HCT116 (cell line): ENCODE measurements at regions of chr6 and their contacts with region 1.

Region 1: DNA sequence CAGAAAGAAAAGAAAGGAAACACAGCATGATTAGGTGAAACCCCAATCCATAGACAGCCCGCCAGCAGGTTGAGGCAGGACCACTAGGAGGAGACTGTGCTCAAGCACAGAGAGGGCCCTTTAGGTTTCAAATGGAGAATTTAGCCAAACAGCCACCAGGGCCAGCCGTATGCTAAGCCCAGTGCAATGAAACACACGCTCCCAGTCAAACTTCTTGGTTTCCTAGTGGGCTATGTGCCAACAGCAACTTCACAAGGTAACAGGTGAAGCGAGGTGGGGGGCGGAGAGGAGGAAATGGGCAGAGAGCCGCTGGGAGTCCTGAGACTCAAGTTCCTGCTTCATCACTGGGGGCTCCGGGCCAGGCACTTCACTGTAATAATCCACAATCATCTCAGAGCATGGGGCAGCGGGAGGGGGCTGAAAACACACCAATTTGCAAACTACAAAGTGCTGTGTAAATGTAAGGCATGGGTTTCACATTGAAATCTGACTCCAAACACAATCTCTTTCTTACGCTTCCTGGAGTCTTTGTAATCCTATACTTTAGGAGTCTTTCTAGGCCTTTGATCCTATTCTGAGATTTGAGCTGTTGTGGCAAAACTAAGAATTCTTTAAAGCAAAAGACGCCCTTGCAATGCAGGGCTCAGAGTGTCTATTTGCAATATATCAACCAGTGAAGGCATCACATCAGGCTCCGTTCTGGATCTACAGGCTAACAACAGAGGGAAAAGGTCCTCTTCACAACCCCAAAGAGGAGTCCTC is 117.3 kb downstream of the OPRM1 start:
- DNase-seq: peak; percentile 52
- ATAC-seq: peak; percentile 99
- H3K4me3 ChIP-seq: no peak overlapping the region
- H3K27ac ChIP-seq: no peak overlapping the region
- H3K4me1 ChIP-seq: no peaks in the 10 kb centered on the region
- H3K27me3 ChIP-seq: no peaks in the 10 kb centered on the region
- CTCF ChIP-seq: peak; percentile 80 to 88 (median 82)
- POLR2A ChIP-seq: no peak
- RAD21 ChIP-seq: peak; percentile 83

Region 2: DNA sequence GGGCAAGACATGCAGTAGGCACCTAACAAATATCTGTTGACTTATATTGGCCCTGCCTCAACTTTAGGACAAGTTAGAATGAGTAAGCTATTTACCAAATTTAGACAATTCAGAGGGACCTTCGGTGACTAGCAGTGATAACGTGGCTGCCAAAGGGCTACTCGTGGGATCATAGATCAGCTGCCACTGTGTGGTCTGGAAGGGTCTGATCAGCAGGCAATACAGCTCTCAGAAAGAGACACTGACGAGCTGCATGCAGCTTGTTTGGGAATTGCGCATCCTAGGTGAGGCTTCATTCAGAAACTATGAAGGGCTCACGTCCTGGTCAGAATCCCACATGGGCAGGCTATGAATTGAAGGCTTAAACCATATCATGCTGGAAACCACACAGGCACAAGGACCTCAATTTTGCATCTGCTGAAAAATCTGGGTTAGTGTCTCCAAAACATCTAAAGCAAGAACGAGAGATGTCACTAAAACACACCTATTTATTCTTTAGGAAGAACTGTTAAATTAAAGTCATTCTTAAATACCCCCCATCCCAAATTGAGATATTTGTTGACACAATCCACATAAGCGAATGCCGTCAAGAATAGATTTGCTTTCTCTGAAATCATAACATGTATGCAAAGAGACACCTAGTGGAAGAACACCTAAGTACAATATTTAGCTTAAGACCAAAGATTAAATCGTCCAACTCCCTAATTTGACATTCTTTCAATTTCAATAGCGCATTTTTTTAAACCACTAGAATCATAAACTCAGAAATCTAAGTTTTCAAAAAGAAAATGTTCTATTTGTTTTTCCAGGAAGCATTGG is 120.7 kb after region 1 on chr6:
- CTCF ChIA-PET with region 1: interaction called, 22 read pairs
- POLR2A ChIA-PET with region 1: no interaction called
- RAD21 ChIA-PET with region 1: interaction called in 1 of 2 experiments, 4 read pairs
- intact Hi-C with region 1: loop called (anchors 1 kb)
- DNase-seq: peak; percentile 33
- ATAC-seq: peak; percentile 81
- H3K4me3 ChIP-seq: peak overlapping the region in 1 of 2 experiments; percentile 7; a peak in 1 of 4 replicates
- H3K27ac ChIP-seq: no peak overlapping the region
- H3K4me1 ChIP-seq: no peaks in the 10 kb centered on the region; a peak in 1 of 4 replicates
- H3K27me3 ChIP-seq: no peaks in the 10 kb centered on the region
- CTCF ChIP-seq: peak; percentile 46 to 66 (median 65); a peak in 4 of 6 replicates
- POLR2A ChIP-seq: no peak
- RAD21 ChIP-seq: peak; percentile 81

Region 3: DNA sequence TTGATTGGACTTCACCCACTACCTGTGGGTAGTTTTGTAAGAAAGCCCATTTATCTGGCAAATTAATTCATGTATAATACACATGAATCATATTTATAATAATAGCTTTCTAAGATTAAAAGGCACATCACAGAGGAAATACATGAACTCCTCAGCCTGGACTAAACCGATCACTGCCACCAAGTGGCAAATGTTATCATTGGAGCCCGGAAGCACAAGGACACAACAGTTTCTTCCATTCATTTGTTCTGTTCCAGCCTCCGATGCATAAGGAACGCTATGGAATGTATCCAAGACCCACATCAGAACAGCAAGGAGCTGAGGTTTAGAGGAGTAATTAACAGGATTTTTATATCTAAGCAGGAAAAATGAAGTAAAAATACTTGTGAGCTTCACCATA is 214.2 kb after region 1 on chr6:
- CTCF ChIA-PET with region 1: interaction called, 19 read pairs
- POLR2A ChIA-PET with region 1: no interaction called
- RAD21 ChIA-PET with region 1: no interaction called
- intact Hi-C with region 1: loop called (anchors 1 kb)
- DNase-seq: peak; percentile 18
- ATAC-seq: peak; percentile 88
- H3K4me3 ChIP-seq: no peak overlapping the region
- H3K27ac ChIP-seq: no peak overlapping the region
- H3K4me1 ChIP-seq: peaks cover 0 to 5% of the 10 kb centered on the region in 2 experiments; a peak in 1 of 4 replicates
- H3K27me3 ChIP-seq: no peaks in the 10 kb centered on the region
- CTCF ChIP-seq: peak; percentile 43 to 51 (median 45); a peak in 5 of 6 replicates
- POLR2A ChIP-seq: no peak
- RAD21 ChIP-seq: peak; percentile 53

Region 4: DNA sequence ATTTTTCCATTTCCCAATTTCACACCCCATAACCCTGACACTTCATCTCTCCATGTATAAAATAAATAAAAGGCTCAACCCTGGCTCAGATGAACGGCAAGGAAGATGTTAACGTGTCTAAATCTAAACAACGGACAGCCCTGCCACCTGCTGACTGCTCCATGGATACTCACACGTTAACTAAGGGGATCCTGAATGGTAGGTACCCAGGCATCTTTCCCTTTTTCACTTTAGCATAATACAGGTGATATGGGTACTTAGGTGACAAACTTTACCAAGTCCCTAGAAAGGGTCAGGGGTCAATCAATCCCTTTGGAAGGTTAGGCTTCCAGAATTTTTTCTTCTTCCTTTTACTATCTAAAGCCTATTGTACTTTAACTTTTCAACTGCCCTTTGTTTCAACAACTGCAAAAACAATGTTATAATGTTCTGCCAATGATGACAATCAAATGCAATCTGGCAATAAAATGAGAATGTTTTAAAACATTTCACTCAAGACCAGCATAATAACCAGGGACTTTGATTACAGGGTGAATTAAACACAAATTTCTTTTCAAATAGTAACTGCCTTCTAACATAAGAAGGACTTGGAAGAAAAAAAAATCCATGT is 252.7 kb after region 1 on chr6:
- CTCF ChIA-PET with region 1: no interaction called
- POLR2A ChIA-PET with region 1: no interaction called
- RAD21 ChIA-PET with region 1: no interaction called
- intact Hi-C with region 1: loop called (anchors 1 kb)
- DNase-seq: no peak
- ATAC-seq: no peak
- H3K4me3 ChIP-seq: no peak overlapping the region
- H3K27ac ChIP-seq: no peak overlapping the region
- H3K4me1 ChIP-seq: peaks cover 28 to 32% of the 10 kb centered on the region in 2 experiments
- H3K27me3 ChIP-seq: no peaks in the 10 kb centered on the region
- CTCF ChIP-seq: peak; percentile 13 to 30 (median 22); a peak in 3 of 6 replicates
- POLR2A ChIP-seq: no peak
- RAD21 ChIP-seq: peak; percentile 55

Region 5: GRCh38 chr6:154510143-154510905 is 354.0 kb after region 1 on chr6 and contains the start of gene CNKSR3:
- CTCF ChIA-PET with region 1: no interaction called
- POLR2A ChIA-PET with region 1: no interaction called
- RAD21 ChIA-PET with region 1: no interaction called
- intact Hi-C with region 1: loop called (anchors 10 kb)
- DNase-seq: peak; percentile 83
- ATAC-seq: peak; percentile 88
- H3K4me3 ChIP-seq: peak within 1 kb of the TSS; percentile 78 to 82
- H3K27ac ChIP-seq: peak within 1 kb of the TSS; percentile 90
- H3K4me1 ChIP-seq: peaks cover 13 to 24% of the 10 kb centered on the region in 2 experiments
- H3K27me3 ChIP-seq: no peaks in the 10 kb centered on the region
- CTCF ChIP-seq: no peak
- POLR2A ChIP-seq: peak; percentile 90
- RAD21 ChIP-seq: peak; percentile 3; the same call in 1 of the 2 replicates
- total RNA-seq, gene CNKSR3: 15.4 TPM

Region 6: DNA sequence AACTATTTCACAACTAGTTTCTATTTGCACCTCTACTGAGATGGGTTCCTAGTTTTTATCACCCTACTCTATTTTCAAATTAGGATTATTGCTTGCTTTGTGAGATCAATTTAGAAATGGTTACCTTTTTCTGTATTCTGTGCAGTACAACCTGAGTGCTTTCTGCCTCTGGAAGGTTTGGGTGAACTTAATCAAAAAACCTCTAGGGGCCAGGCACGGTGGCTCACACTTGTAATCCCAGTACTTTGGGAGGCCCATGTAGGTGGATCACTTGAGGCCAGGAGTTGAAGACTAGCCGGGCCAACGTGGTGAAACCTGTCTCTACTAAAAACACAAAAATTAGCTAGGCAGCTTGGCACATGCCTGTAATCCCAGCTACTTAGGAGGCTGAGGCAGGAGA is 640.2 kb after region 1 on chr6:
- CTCF ChIA-PET with region 1: no interaction called
- POLR2A ChIA-PET with region 1: no interaction called
- RAD21 ChIA-PET with region 1: no interaction called
- intact Hi-C with region 1: loop called (anchors 5 kb)
- DNase-seq: no peak
- ATAC-seq: peak; percentile 58
- H3K4me3 ChIP-seq: no peak overlapping the region
- H3K27ac ChIP-seq: no peak overlapping the region
- H3K4me1 ChIP-seq: peaks cover 4 to 14% of the 10 kb centered on the region in 2 experiments; a peak in 2 of 4 replicates
- H3K27me3 ChIP-seq: no peaks in the 10 kb centered on the region
- CTCF ChIP-seq: no peak
- POLR2A ChIP-seq: no peak
- RAD21 ChIP-seq: no peak

Region 7: GRCh38 chr6:154916857-154917256 is 760.5 kb after region 1 on chr6:
- CTCF ChIA-PET with region 1: no interaction called
- POLR2A ChIA-PET with region 1: no interaction called
- RAD21 ChIA-PET with region 1: no interaction called
- intact Hi-C with region 1: loop called (anchors 5 kb)
- DNase-seq: no peak
- ATAC-seq: no peak
- H3K4me3 ChIP-seq: no peak overlapping the region
- H3K27ac ChIP-seq: no peak overlapping the region
- H3K4me1 ChIP-seq: no peaks in the 10 kb centered on the region
- H3K27me3 ChIP-seq: no peaks in the 10 kb centered on the region
- CTCF ChIP-seq: no peak
- POLR2A ChIP-seq: no peak
- RAD21 ChIP-seq: no peak